WTC11 (cell line): ENCODE measurements at regions of chr2 and their contacts with region 1.

Region 1: DNA sequence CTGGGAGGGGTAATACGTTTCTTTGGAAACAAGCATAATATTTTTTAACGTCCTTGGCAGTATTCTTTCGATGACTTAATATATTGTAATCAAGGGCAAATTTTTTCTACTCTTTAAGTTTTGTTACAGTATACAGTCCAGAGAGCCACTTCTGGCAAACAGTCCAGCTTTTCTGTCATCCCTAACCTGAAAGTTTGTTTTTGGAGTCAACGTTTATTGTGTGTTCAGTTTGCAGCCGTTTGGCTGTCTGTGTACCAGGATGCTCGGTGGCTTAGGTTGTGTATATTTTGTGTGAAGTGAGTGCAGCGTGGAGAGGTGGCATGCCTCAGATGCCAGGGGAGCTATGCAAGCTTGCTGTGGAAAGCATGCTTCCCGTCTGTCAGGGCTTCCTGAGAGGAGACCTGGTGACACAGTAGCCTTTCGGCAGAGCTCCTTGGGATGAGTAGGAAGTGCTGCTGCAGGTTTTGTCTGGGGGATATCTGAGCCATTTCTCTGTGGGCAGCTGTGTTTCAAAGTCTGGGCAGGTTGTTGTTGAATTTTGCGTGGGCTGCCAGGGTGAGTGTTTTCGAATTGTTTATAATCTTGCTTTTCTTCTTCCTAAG is 14.7 kb downstream of the MAP3K20 start:
- DNase-seq: no peak
- ATAC-seq: no peak
- H3K4me3 Mint-ChIP-seq: no peak overlapping the region
- H3K27ac Mint-ChIP-seq: peak overlapping the region; percentile 11; the same call in 1 of the 2 replicates
- H3K4me1 Mint-ChIP-seq: peaks cover 30% of the 10 kb centered on the region
- H3K27me3 Mint-ChIP-seq: no peaks in the 10 kb centered on the region
- CTCF ChIP-seq: no peak

Region 2: GRCh38 chr2:173079968-173080860 is 10.2 kb before region 1 on chr2:
- CTCF ChIA-PET with region 1: interaction called, 13 read pairs
- POLR2A ChIA-PET with region 1: no interaction called
- DNase-seq: no peak
- ATAC-seq: no peak
- H3K4me3 Mint-ChIP-seq: no peak overlapping the region
- H3K27ac Mint-ChIP-seq: no peak overlapping the region
- H3K4me1 Mint-ChIP-seq: peaks cover 11% of the 10 kb centered on the region
- H3K27me3 Mint-ChIP-seq: peaks cover under 1% of the 10 kb centered on the region
- CTCF ChIP-seq: no peak

Region 3: DNA sequence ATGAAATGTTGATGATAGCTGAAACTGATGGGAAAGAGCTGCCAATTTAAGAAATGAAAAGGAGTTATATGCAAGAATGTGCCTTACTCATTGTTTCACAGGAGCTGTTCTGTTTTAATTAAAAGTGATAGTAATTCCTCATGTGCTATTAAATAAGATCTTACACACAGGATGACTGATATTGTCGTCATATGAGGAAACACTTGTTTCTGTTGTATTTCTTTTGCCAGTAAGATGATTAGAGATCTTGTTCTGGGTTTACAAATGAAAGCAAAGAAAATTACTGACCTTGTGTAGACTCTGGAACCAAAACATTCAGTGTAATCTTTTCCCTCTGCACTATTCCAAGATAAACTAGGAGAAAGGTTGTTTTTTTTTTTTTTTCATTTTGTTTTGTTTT is 108.9 kb after region 1 on chr2:
- CTCF ChIA-PET with region 1: interaction called, 13 read pairs
- POLR2A ChIA-PET with region 1: no interaction called
- DNase-seq: no peak
- ATAC-seq: no peak
- H3K4me3 Mint-ChIP-seq: no peak overlapping the region
- H3K27ac Mint-ChIP-seq: peak overlapping the region; percentile 17; the same call in 1 of the 2 replicates
- H3K4me1 Mint-ChIP-seq: peaks cover 50% of the 10 kb centered on the region
- H3K27me3 Mint-ChIP-seq: no peaks in the 10 kb centered on the region
- CTCF ChIP-seq: no peak

Region 4: GRCh38 chr2:173210270-173211196 is 120.2 kb after region 1 on chr2:
- CTCF ChIA-PET with region 1: interaction called, 26 read pairs
- POLR2A ChIA-PET with region 1: no interaction called
- DNase-seq: peak; percentile 58
- ATAC-seq: peak; percentile 89
- H3K4me3 Mint-ChIP-seq: no peak overlapping the region
- H3K27ac Mint-ChIP-seq: no peak overlapping the region
- H3K4me1 Mint-ChIP-seq: peaks cover 9% of the 10 kb centered on the region
- H3K27me3 Mint-ChIP-seq: no peaks in the 10 kb centered on the region
- CTCF ChIP-seq: peak; percentile 60